CD14-positive monocyte (primary cell): ENCODE measurements at regions of chr5 and their contacts with region 1.

Region 1: GRCh38 chr5:76771705-76772405 is 47.0 kb upstream of the F2RL1 start:
- DNase-seq: no peak
- H3K4me3 ChIP-seq: no peak overlapping the region
- H3K4me3 Mint-ChIP-seq: no peak overlapping the region
- H3K27ac ChIP-seq: no peak overlapping the region
- H3K27ac Mint-ChIP-seq: peak overlapping the region in 1 of 7 donors; percentile 14
- H3K4me1 ChIP-seq: peaks cover 5 to 11% of the 10 kb centered on the region in 2 donors
- H3K4me1 Mint-ChIP-seq: peaks cover 15% of the 10 kb centered on the region
- H3K27me3 ChIP-seq: no peaks in the 10 kb centered on the region
- H3K27me3 Mint-ChIP-seq: peaks cover 0 to 3% (median 2%) of the 10 kb centered on the region in 3 donors
- CTCF ChIP-seq: no peak

Region 2: GRCh38 chr5:76601470-76601869 is 170.4 kb before region 1 on chr5:
- intact Hi-C with region 1: loop called (anchors 5 to 10 kb)
- DNase-seq: peak; percentile 26 to 50 (median 42)
- H3K4me3 ChIP-seq: no peak overlapping the region
- H3K4me3 Mint-ChIP-seq: no peak overlapping the region
- H3K27ac ChIP-seq: no peak overlapping the region
- H3K27ac Mint-ChIP-seq: no peak overlapping the region
- H3K4me1 ChIP-seq: no peaks in the 10 kb centered on the region
- H3K4me1 Mint-ChIP-seq: peaks cover 6% of the 10 kb centered on the region
- H3K27me3 ChIP-seq: no peaks in the 10 kb centered on the region
- H3K27me3 Mint-ChIP-seq: no peaks in the 10 kb centered on the region
- CTCF ChIP-seq: peak; percentile 77

Region 3: DNA sequence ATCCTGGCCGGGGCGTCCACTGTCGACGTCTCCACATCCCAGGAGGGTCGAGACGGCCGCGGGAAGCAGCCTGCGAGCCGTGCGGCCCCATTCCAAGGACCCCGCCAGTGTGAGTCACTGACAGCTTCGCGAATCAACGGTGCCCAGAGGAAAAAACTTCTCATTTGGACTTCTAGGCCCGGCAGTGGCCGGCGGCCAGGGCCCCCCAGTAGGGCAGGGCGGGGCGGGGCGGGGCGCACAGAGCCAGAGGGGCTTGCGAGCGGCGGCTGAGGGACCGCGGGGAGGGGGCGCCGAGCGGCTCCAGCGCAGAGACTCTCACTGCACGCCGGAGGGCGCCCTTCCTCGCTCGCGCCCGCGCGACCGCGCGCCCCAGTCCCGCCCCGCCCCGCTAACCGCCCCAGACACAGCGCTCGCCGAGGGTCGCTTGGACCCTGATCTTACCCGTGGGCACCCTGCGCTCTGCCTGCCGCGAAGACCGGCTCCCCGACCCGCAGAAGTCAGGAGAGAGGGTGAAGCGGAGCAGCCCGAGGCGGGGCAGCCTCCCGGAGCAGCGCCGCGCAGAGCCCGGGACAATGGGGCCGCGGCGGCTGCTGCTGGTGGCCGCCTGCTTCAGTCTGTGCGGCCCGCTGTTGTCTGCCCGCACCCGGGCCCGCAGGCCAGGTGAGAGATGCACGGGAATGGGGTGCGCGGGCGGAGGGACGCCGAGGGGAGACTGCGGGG is 56.0 kb before region 1 on chr5 and contains the start of gene F2R:
- intact Hi-C with region 1: loop called (anchors 10 kb)
- DNase-seq: peak; percentile 11 to 31 (median 20)
- H3K4me3 ChIP-seq: peak within 1 kb of the TSS; percentile 67 to 83 (median 71)
- H3K4me3 Mint-ChIP-seq: peak within 1 kb of the TSS; percentile 89 to 92
- H3K27ac ChIP-seq: no peak within 1 kb of the TSS
- H3K27ac Mint-ChIP-seq: peak within 1 kb of the TSS in 3 of 7 donors; percentile 32 to 66 (median 58)
- H3K4me1 ChIP-seq: peaks cover 27 to 31% of the 10 kb centered on the region in 2 donors
- H3K4me1 Mint-ChIP-seq: peaks cover 33% of the 10 kb centered on the region
- H3K27me3 ChIP-seq: peaks cover 26 to 47% of the 10 kb centered on the region in 2 donors
- H3K27me3 Mint-ChIP-seq: peaks cover 46 to 65% (median 49%) of the 10 kb centered on the region in 3 donors
- CTCF ChIP-seq: peak; percentile 67
- polyA plus RNA-seq, gene F2R: 0.09 to 0.33 (median 0.22) TPM

Region 4: GRCh38 chr5:76867827-76868693 is 96.2 kb after region 1 on chr5:
- intact Hi-C with region 1: no loop called
- DNase-seq: peak; percentile 40 to 65 (median 50)
- H3K4me3 ChIP-seq: no peak overlapping the region
- H3K4me3 Mint-ChIP-seq: no peak overlapping the region
- H3K27ac ChIP-seq: no peak overlapping the region
- H3K27ac Mint-ChIP-seq: peak overlapping the region in 4 of 7 donors; percentile 16 to 41 (median 22)
- H3K4me1 ChIP-seq: peaks cover 0 to 2% of the 10 kb centered on the region in 2 donors
- H3K4me1 Mint-ChIP-seq: peaks cover under 1% of the 10 kb centered on the region
- H3K27me3 ChIP-seq: no peaks in the 10 kb centered on the region
- H3K27me3 Mint-ChIP-seq: peaks cover 0 to 2% (median 0%) of the 10 kb centered on the region in 3 donors
- CTCF ChIP-seq: peak; percentile 71